Activated CD4-positive, alpha-beta memory T cell treated with anti-CD3 and anti-CD28 coated beads for 36 hours (primary cell): ENCODE measurements at regions of chr2 and their contacts with region 1.

Region 1: GRCh38 chr2:197434541-197435513 is at the start of gene SF3B1:
- DNase-seq: peak; percentile 100
- H3K4me3 Mint-ChIP-seq: peak within 1 kb of the TSS; percentile 97
- H3K27ac Mint-ChIP-seq: peak within 1 kb of the TSS; percentile 100
- H3K4me1 Mint-ChIP-seq: peaks cover 45% of the 10 kb centered on the region
- H3K27me3 Mint-ChIP-seq: peaks cover 1% of the 10 kb centered on the region
- total RNA-seq, gene SF3B1: 228 to 245 TPM

Region 2: GRCh38 chr2:196987649-196988364 is 447.0 kb before region 1 on chr2:
- CTCF ChIA-PET with region 1: interaction called, 3 read pairs
- POLR2A ChIA-PET with region 1: interaction called, 3 read pairs
- intact Hi-C with region 1: loop called (anchors 2 kb)
- DNase-seq: peak; percentile 61
- H3K4me3 Mint-ChIP-seq: peak overlapping the region; percentile 7
- H3K27ac Mint-ChIP-seq: peak overlapping the region; percentile 88
- H3K4me1 Mint-ChIP-seq: peaks cover 61% of the 10 kb centered on the region
- H3K27me3 Mint-ChIP-seq: no peaks in the 10 kb centered on the region

Region 3: DNA sequence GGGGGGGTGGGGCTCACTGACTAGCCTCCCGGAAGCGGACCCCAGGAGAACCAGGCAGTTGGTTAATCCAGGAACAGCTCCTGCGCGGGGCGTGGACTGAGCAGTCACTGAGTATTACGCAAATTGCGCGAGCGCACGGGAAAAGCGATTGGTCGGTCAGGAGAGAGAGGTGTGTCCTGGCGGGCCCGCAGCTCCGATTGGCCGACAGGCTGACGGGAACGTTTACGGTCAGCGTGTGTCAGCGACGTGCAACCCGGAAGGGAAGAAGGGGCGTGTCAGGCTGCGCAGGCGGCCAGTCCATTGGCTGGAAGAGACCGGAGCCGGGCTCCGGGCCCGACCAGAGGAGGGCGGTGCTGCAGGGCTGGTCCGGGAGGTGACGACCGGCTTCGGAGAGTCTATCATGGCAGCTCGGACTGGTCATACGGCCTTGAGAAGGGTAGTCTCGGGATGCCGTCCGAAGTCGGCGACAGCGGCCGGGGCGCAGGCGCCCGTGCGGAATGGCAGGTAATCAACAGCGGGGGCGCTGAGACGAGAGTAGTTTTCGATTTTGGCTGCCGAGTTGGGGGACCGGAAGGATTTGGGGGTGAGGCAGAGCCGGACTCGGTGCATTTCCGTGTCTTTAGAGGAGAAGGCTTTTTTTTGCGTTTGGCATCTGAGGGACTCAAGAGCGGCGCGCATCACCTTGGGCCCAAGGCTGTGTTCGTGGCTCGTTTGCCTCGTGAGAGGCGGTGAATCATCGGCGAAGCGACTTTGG is 18.5 kb after region 1 on chr2 and contains the start of gene COQ10B:
- CTCF ChIA-PET with region 1: interaction called, 19 read pairs
- POLR2A ChIA-PET with region 1: interaction called, 68 read pairs
- intact Hi-C with region 1: loop called (anchors 1 kb)
- DNase-seq: peak; percentile 100
- H3K4me3 Mint-ChIP-seq: peak within 1 kb of the TSS; percentile 99
- H3K27ac Mint-ChIP-seq: peak within 1 kb of the TSS; percentile 100
- H3K4me1 Mint-ChIP-seq: peaks cover 39% of the 10 kb centered on the region
- H3K27me3 Mint-ChIP-seq: no peaks in the 10 kb centered on the region
- total RNA-seq, gene COQ10B: 21.5 TPM

Region 4: DNA sequence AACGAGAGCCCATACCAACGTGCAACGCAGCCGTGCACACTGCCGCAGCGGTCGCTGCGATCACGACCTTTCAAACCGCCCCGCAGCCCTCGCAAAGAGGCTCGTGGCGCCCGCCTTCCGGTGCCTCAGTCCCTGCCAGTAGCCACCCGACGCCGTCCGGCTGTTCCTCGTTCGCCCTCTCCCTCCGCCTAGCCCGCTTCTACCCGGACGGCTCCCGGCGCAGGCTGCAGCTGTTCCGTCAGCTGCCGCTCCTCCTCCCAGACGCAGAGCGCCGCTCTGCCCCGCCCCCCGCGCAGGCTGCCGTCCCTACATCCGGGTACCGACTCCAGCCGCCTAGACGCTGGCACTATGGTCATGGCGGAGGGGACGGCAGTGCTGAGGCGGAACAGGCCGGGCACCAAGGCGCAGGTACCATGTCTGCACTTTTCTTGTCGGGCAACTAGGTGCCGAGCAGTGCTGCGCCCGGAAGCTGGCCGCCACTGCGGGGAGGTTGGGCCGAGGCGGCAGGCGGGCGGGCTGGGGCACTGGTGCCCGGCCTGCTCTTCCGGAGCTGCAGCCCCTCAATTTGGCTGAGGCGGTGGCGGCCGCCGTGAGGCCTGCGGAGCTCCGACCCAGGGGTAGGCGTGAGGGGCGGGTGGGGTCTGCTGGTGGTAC is 81.0 kb after region 1 on chr2 and contains the start of gene MOB4:
- CTCF ChIA-PET with region 1: no interaction called
- POLR2A ChIA-PET with region 1: interaction called, 5 read pairs
- intact Hi-C with region 1: loop called (anchors 1 kb)
- DNase-seq: peak; percentile 96
- H3K4me3 Mint-ChIP-seq: peak within 1 kb of the TSS; percentile 92
- H3K27ac Mint-ChIP-seq: peak within 1 kb of the TSS; percentile 88
- H3K4me1 Mint-ChIP-seq: peaks cover 24% of the 10 kb centered on the region
- H3K27me3 Mint-ChIP-seq: no peaks in the 10 kb centered on the region
- total RNA-seq, gene MOB4: 18.9 to 19.5 TPM

Region 5: DNA sequence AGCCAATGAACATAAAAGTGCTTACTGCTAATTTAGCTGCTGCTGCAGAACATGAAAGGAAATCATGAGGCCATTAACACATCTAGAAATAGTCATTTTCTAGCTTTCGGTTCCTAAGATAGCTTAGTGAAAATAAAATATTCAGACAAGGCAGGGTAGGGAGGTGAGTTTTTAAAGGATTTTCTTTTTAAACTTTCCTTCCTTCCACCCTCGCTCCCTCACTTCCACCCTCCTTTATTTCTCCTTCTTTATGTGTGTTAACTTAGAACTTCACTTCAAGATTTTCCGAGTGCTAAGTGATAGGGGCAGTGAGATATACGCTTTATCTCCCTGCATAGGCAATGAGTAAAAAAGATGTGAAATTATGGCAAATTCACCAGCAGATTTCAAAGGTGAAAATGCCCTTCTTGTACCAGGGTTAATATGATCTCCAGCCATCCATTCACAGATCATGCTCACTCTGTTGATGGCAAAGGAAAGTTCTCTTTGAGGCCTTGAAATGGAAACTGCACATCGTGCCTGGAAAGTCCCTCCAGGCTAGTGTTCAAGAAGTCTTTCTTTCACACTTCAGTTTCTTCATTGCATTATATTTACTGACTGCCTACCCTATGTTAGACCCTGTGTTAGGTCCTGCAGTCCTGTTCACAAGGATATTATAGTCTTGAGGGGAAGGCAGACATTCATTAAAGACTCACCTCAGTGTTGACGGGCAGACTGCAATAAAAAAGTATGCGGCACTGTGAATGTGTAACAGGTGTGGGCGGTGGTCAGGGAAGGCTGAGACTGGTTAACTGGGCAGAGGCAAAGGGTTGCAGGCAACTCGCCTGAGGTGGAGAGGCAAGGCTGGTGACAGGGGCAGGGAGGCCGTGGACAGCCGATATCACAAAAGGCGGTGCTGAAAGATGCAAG is 570.3 kb after region 1 on chr2:
- CTCF ChIA-PET with region 1: no interaction called
- POLR2A ChIA-PET with region 1: no interaction called
- intact Hi-C with region 1: loop called (anchors 5 kb)
- DNase-seq: peak; percentile 62
- H3K4me3 Mint-ChIP-seq: peak overlapping the region; percentile 61
- H3K27ac Mint-ChIP-seq: peak overlapping the region; percentile 84
- H3K4me1 Mint-ChIP-seq: peaks cover 56% of the 10 kb centered on the region
- H3K27me3 Mint-ChIP-seq: no peaks in the 10 kb centered on the region